Activated CD4-positive, alpha-beta memory T cell treated with anti-CD3 and anti-CD28 coated beads for 36 hours (primary cell): ENCODE measurements at regions of chr1 and their contacts with region 1.

Region 1: GRCh38 chr1:23800400-23801337 is at the start of gene GALE:
- DNase-seq: peak; percentile 98
- H3K4me3 Mint-ChIP-seq: peak within 1 kb of the TSS; percentile 94
- H3K27ac Mint-ChIP-seq: peak within 1 kb of the TSS; percentile 90
- H3K4me1 Mint-ChIP-seq: peaks cover 14% of the 10 kb centered on the region
- H3K27me3 Mint-ChIP-seq: no peaks in the 10 kb centered on the region
- total RNA-seq, gene GALE: 49.4 to 54.9 TPM

Region 2: DNA sequence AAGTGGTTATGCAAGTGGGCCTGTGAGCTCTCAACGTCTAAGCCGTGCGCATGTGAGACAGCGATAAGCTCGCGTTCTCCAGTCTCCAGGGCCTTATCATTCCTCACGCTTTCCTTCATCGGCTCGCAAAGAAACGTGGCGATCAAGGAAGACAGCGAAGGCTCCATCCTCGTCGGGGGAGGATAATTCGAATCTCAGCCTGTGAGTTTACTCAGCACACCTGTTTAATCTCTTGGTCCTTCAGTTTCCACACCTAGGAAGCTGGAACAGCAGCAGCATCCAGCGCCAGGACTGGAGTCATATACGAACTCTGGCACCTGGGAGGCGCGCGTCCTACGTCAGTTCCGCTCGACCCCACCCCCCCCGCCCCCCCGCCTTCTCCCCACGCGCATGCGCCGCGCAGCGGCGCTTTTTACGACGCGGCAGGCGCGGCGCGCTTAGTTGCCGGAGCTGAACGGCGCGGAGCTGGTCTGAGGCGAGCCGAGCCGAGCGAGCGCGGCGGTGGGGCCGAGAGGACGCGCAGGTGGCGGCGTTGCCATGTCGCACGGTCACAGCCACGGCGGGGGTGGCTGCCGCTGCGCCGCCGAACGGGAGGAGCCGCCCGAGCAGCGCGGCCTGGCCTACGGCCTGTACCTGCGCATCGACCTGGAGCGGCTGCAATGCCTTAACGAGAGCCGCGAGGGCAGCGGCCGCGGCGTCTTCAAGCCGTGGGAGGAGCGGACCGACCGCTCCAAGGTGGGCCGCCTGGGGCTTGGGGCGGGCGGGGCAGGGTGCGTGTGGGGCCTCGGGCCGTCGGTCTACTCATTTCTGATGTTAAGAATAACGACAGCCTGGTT is 22.5 kb before region 1 on chr1 and contains the start of gene PITHD1:
- CTCF ChIA-PET with region 1: interaction called, 7 read pairs
- POLR2A ChIA-PET with region 1: interaction called, 4 read pairs
- intact Hi-C with region 1: loop called (anchors 1 kb)
- DNase-seq: peak; percentile 87
- H3K4me3 Mint-ChIP-seq: peak within 1 kb of the TSS; percentile 92
- H3K27ac Mint-ChIP-seq: peak within 1 kb of the TSS; percentile 85
- H3K4me1 Mint-ChIP-seq: peaks cover 44% of the 10 kb centered on the region
- H3K27me3 Mint-ChIP-seq: no peaks in the 10 kb centered on the region
- total RNA-seq, gene PITHD1: 67.2 to 69.0 TPM

Region 3: DNA sequence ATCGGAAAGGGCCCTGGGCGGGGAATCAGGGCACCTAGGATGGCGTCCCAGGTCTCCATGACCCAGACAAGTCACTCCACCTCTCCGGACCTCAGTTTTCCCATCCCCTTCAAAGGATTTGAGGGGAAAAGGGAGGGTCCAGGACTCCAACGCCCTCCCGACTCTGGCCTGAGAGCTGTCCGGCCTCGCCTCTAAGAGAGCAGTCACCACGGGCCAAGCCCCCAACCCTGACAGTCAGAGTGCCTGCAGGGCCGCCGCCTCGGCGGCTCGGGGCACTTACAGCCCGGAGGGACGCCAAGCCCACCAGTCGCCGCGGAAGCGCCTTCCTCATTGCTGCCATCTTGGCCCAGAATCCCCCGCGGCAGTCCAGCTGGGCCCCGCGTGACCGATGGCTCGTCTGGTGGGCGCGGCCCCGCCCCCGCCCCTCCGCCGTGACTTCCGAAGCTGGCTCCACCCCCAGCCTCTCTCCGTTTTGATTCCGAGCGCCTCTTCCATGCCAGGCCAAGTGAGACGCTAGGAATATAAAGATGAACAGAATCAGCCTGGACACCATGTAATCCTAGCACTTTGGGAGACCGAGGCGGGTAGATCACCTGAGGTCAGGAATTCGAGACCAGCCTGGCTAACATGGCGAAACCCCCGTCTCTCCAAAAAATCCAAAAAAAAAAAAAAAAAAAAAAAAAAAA is 24.6 kb after region 1 on chr1 and contains the start of gene HMGCL:
- CTCF ChIA-PET with region 1: interaction called, 3 read pairs
- POLR2A ChIA-PET with region 1: interaction called, 14 read pairs
- intact Hi-C with region 1: no loop called
- DNase-seq: peak; percentile 94
- H3K4me3 Mint-ChIP-seq: peak within 1 kb of the TSS; percentile 97
- H3K27ac Mint-ChIP-seq: peak within 1 kb of the TSS; percentile 95
- H3K4me1 Mint-ChIP-seq: peaks cover 17% of the 10 kb centered on the region
- H3K27me3 Mint-ChIP-seq: no peaks in the 10 kb centered on the region
- total RNA-seq, gene HMGCL: 34.2 to 35.3 TPM

Region 4: DNA sequence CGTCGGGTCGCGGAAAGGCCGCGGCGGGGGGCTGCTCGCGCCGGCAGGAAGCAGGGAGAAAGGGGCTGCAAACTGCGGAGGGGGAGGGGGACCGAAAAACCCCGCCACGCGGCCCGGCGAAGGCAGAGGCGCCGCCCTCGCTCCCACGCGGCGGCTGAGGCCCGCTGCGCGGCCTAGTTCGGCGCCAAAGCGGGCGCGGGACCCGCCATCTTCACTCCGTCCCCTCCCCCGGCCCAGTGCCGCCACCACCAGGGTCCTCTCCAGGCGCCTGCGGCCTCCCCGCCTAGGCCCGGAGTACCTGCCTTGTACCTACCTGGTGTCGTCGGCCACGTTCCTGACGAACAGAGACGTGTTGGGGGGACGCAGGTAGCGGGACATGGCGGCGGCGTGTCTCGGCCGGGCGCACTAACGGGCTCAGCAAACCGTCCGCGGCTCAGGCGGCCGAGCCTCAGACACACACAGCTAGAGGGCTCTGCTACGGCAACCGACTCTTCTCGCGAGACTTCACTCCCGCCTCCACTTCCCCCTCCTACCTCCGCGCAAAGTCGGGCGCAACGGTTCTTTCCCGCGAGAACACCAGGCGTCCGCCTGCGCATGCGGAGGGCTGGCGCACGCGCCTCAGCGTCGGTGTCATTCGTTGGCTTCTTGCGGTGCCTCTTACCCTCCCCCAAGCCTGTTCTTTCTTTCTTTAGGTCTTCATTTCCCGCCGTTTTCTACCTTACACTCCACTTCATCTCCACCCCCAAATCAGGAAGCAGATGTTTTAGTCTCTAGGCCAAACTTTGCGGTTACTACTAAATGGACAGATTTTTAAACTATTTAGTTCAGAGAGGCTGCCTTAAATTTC is 179.4 kb after region 1 on chr1 and contains the start of gene SRSF10:
- CTCF ChIA-PET with region 1: no interaction called
- POLR2A ChIA-PET with region 1: interaction called, 3 read pairs
- intact Hi-C with region 1: loop called (anchors 1 kb)
- DNase-seq: peak; percentile 99
- H3K4me3 Mint-ChIP-seq: peak within 1 kb of the TSS; percentile 92
- H3K27ac Mint-ChIP-seq: peak within 1 kb of the TSS; percentile 100
- H3K4me1 Mint-ChIP-seq: peaks cover 40% of the 10 kb centered on the region
- H3K27me3 Mint-ChIP-seq: no peaks in the 10 kb centered on the region
- total RNA-seq, gene SRSF10: 175 to 184 TPM